ENCODE measurements at regions of chr12 and their contacts with region 1.

Region 1: DNA sequence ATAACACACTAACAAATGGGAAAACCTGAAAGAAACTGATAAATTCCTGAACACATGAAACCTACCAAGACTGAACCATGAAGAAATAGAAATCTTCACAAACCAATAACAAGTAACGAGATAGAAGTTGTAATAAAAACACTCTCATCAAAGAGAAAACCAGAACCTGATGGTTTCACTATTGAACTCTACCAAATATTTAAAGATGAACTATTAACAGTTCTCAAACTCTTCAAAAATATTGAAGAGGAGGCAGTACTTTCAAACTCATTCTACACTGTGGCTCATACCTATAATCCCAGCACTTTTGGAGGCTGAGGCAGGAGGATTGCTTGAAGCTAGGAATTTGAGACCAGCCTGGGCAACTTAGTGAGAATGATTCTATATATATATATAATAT is 48.4 kb upstream of the TMTC2 start:
- DNase-seq: no peak
- H3K4me3 ChIP-seq: no peak overlapping the region
- H3K27ac ChIP-seq: no peak overlapping the region
- H3K4me1 ChIP-seq: no peaks in the 10 kb centered on the region
- H3K27me3 ChIP-seq: no peaks in the 10 kb centered on the region
- CTCF ChIP-seq: no peak

Region 2: GRCh38 chr12:82660541-82661325 is 22.4 kb after region 1 on chr12:
- CTCF ChIA-PET with region 1: no interaction called
- POLR2A ChIA-PET with region 1: no interaction called
- intact Hi-C with region 1: no loop called
- DNase-seq: no peak
- H3K4me3 ChIP-seq: no peak overlapping the region
- H3K27ac ChIP-seq: no peak overlapping the region
- H3K4me1 ChIP-seq: no peaks in the 10 kb centered on the region
- H3K27me3 ChIP-seq: no peaks in the 10 kb centered on the region
- CTCF ChIP-seq: no peak

Region 3: DNA sequence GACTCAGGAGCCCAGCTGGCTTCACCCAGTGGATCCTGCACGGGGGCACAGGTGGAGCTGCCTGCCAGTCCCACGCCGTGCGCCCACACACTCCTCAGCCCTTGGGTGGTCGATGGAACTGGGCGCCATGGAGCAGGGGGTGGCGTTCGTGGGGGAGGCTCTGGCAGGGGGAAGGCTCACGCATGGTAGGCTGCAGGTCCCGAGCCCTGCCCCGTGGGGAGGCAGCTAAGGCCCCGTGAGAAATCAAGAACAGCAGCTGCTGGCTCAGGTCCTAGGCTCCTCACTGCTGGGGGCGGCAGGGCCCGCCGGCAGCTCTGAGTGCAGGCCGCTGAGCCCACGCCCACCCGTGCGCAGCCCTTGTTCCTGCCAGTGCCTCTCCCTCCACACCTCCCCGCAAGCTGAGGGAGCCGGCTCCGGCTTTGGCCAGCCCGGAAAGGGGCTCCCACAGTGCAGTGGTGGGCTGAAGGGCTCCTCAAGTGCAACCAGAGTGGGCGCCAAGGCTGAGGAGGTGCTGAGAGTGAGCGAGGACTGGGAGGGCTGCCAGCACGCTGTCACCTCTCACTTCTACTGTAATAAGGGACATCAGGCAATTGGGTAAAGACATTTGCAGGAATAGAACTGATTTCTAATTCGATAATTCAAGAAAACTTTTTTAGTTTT is 163.8 kb after region 1 on chr12:
- CTCF ChIA-PET with region 1: no interaction called
- POLR2A ChIA-PET with region 1: interaction called, 26 read pairs
- intact Hi-C with region 1: no loop called
- DNase-seq: no peak
- H3K4me3 ChIP-seq: no peak overlapping the region
- H3K27ac ChIP-seq: no peak overlapping the region
- H3K4me1 ChIP-seq: 0 out of 2 replicates have a peak, but pooled peaks cover 5% of the 10 kb centered on the region
- H3K27me3 ChIP-seq: no peaks in the 10 kb centered on the region
- CTCF ChIP-seq: no peak

Measured in PC-9 (cell line).